Natural killer cell (primary cell): ENCODE measurements at regions of chr9 and their contacts with region 1.

Region 1: GRCh38 chr9:91253488-91253887 is 108.2 kb downstream of the AUH start:
- DNase-seq: peak in 1 of 2 donors; percentile 67
- ATAC-seq: peak; percentile 75 to 92 (median 89)
- H3K4me3 ChIP-seq: no peak overlapping the region
- H3K4me3 Mint-ChIP-seq: no peak overlapping the region
- H3K27ac ChIP-seq: peak overlapping the region; percentile 23
- H3K27ac Mint-ChIP-seq: no peak overlapping the region
- H3K4me1 ChIP-seq: peaks cover 19% of the 10 kb centered on the region
- H3K4me1 Mint-ChIP-seq: peaks cover 36 to 37% of the 10 kb centered on the region in 2 donors
- H3K27me3 ChIP-seq: no peaks in the 10 kb centered on the region
- H3K27me3 Mint-ChIP-seq: no peaks in the 10 kb centered on the region
- CTCF ChIP-seq: peak; percentile 17

Region 2: GRCh38 chr9:91036826-91037510 is 216.5 kb before region 1 on chr9:
- intact Hi-C with region 1: loop called (anchors 5 kb)
- DNase-seq: peak; percentile 36 to 75
- ATAC-seq: peak; percentile 78 to 86 (median 82)
- H3K4me3 ChIP-seq: no peak overlapping the region
- H3K4me3 Mint-ChIP-seq: peak overlapping the region; percentile 69
- H3K27ac ChIP-seq: no peak overlapping the region
- H3K27ac Mint-ChIP-seq: peak overlapping the region in 1 of 2 donors; percentile 71
- H3K4me1 ChIP-seq: peaks cover 23% of the 10 kb centered on the region
- H3K4me1 Mint-ChIP-seq: peaks cover 37 to 47% of the 10 kb centered on the region in 2 donors
- H3K27me3 ChIP-seq: no peaks in the 10 kb centered on the region
- H3K27me3 Mint-ChIP-seq: peaks cover 0 to 4% of the 10 kb centered on the region in 2 donors
- CTCF ChIP-seq: peak; percentile 53

Region 3: GRCh38 chr9:91101611-91102168 is 151.8 kb before region 1 on chr9:
- intact Hi-C with region 1: loop called (anchors 5 kb)
- DNase-seq: peak; percentile 41 to 92
- ATAC-seq: peak; percentile 59 to 83 (median 63)
- H3K4me3 ChIP-seq: no peak overlapping the region
- H3K4me3 Mint-ChIP-seq: peak overlapping the region; percentile 57
- H3K27ac ChIP-seq: no peak overlapping the region
- H3K27ac Mint-ChIP-seq: peak overlapping the region; percentile 65 to 85
- H3K4me1 ChIP-seq: peaks cover 38% of the 10 kb centered on the region
- H3K4me1 Mint-ChIP-seq: peaks cover 36 to 37% of the 10 kb centered on the region in 2 donors
- H3K27me3 ChIP-seq: no peaks in the 10 kb centered on the region
- H3K27me3 Mint-ChIP-seq: peaks cover 0 to 5% of the 10 kb centered on the region in 2 donors
- CTCF ChIP-seq: no peak

Region 4: DNA sequence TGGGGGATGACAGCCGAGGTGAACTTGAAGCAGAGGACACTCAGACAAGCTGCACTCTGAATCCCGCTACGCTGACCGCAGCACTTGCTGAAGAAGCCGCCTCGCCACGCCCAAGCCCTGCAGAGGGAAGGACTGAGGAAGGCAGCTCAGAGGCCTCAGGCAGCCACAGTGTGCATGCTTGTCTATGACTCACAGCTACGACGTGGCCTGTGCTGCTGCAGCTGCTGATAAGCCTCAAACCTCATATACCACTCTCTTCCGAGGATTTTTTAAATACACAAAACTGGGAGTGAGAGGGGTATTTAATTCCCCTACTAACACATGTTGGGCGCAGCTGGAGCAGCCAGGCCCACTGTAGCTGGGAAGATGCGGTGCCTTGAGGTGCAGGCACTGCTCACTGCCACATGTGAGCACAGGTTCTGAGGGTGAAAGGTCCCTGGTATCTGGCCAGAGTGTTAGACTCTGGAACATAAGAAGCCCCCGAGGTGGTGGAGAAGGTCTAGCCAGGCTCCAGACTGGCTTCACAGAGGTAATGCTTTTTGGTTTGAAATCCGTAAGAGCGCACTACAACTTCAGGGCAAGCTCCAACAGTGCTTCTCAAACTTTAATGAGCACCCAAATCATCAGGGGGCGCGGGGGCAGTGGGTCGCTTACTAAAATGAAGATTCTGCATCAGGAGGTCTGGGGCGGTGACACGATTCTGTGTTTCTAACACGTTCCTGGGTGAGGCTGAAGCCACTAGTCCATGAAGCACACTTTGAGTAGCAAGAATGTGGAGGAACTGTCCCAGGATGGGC is 88.6 kb before region 1 on chr9:
- intact Hi-C with region 1: loop called (anchors 5 kb)
- DNase-seq: peak; percentile 68 to 75
- ATAC-seq: peak; percentile 77 to 89 (median 78)
- H3K4me3 ChIP-seq: no peak overlapping the region
- H3K4me3 Mint-ChIP-seq: peak overlapping the region; percentile 87
- H3K27ac ChIP-seq: peak overlapping the region; percentile 78
- H3K27ac Mint-ChIP-seq: peak overlapping the region; percentile 93 to 94
- H3K4me1 ChIP-seq: peaks cover 62% of the 10 kb centered on the region
- H3K4me1 Mint-ChIP-seq: peaks cover 44 to 46% of the 10 kb centered on the region in 2 donors
- H3K27me3 ChIP-seq: no peaks in the 10 kb centered on the region
- H3K27me3 Mint-ChIP-seq: no peaks in the 10 kb centered on the region
- CTCF ChIP-seq: no peak

Region 5: DNA sequence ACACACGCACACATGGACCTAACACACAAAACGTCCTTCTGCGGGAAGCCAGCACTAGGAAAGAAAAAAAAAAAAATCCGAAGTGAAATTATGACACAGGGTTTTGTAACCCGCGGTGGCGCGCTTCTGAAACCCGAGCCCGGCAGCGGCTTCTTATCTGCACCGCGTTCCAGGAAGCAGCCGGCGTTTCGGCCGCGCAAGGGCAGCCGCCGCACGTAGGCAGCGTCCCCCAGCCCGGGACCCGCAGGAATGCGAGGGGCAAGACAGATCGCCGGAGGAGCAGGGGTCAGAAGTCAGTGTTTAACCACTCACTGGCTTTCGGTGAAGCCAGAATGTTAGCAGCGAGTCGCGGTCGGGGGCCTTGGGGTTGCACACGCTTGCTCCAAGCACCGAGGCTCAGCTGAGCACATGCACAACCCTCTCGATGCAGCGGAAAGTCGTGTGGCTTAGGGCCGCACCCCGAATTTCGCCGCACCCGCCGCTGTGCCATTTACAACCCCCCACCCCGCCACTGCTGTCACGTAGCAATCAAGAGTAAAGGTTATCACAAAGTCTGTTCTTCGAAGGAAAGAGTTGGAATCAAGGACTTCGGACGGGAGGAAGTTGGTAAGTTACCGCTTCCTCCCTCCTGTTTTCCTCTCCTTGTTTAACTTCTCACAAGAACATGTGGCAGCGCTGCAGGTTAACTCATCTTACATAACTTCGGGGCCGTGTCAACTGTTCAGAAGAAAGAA is 59.7 kb before region 1 on chr9:
- intact Hi-C with region 1: loop called (anchors 5 kb)
- DNase-seq: peak; percentile 69 to 75
- ATAC-seq: peak; percentile 45 to 76 (median 74)
- H3K4me3 ChIP-seq: peak overlapping the region; percentile 44
- H3K4me3 Mint-ChIP-seq: peak overlapping the region; percentile 92
- H3K27ac ChIP-seq: peak overlapping the region; percentile 81
- H3K27ac Mint-ChIP-seq: peak overlapping the region; percentile 95 to 98
- H3K4me1 ChIP-seq: peaks cover 48% of the 10 kb centered on the region
- H3K4me1 Mint-ChIP-seq: peaks cover 55 to 61% of the 10 kb centered on the region in 2 donors
- H3K27me3 ChIP-seq: no peaks in the 10 kb centered on the region
- H3K27me3 Mint-ChIP-seq: no peaks in the 10 kb centered on the region
- CTCF ChIP-seq: no peak

Region 6: DNA sequence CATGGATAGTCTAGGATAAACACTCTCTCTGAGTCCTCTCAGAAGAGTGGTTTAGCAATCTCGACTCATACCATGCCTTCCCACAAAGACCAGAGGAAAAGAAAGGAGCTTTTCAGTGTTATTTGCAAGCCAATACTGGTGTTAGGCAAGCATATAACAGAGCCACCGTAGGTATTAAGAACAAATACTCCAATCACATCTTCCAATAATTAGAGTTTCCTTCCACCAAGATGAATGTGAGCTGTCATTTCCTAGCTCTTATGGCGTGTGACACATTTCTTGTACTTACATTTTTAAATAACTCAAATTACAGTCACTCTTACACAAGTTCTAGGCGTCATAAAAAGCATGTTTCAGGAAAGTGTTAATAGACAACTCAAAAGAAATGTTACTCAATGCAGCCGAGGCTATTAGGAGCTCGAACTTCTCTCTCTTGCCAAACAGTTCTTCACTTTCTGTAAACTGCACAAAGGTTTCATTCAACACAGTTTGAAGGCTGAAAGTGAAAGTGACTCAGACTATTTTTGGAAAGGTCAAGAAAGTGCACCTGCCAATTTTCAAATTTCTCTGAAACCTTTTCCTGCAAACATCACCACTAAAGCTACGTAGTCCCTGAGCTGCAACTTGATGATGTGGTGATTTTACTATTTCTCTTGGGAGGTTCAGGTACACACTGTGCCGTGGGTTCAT is 45.6 kb before region 1 on chr9:
- intact Hi-C with region 1: loop called (anchors 5 kb)
- DNase-seq: peak in 1 of 2 donors; percentile 44
- ATAC-seq: peak; percentile 54 to 69 (median 58)
- H3K4me3 ChIP-seq: no peak overlapping the region
- H3K4me3 Mint-ChIP-seq: peak overlapping the region; percentile 67
- H3K27ac ChIP-seq: peak overlapping the region; percentile 56
- H3K27ac Mint-ChIP-seq: peak overlapping the region; percentile 75 to 88
- H3K4me1 ChIP-seq: peaks cover 29% of the 10 kb centered on the region
- H3K4me1 Mint-ChIP-seq: peaks cover 42 to 47% of the 10 kb centered on the region in 2 donors
- H3K27me3 ChIP-seq: no peaks in the 10 kb centered on the region
- H3K27me3 Mint-ChIP-seq: no peaks in the 10 kb centered on the region
- CTCF ChIP-seq: no peak

Region 7: DNA sequence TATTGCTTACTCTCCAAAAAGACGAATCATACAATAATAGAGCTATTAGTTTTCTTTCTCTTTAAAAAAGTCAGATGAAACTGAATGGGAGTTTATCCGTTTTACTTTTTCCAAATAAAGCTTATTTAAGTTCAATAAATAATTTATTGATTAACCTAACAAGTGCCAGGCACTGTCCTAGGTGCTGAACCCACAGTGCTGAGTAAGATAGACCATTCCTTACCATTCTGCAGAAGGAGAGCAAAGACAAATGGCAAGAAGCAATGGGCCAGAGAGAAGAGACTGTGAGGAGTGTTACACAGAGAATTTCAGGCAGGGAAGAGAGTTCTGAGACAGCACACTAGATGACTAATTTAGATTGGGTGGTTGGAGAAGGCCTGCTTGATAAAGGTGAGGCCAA is 19.0 kb before region 1 on chr9:
- intact Hi-C with region 1: no loop called
- DNase-seq: no peak
- ATAC-seq: no peak
- H3K4me3 ChIP-seq: no peak overlapping the region
- H3K4me3 Mint-ChIP-seq: no peak overlapping the region
- H3K27ac ChIP-seq: no peak overlapping the region
- H3K27ac Mint-ChIP-seq: no peak overlapping the region
- H3K4me1 ChIP-seq: no peaks in the 10 kb centered on the region
- H3K4me1 Mint-ChIP-seq: peaks cover 0 to 5% of the 10 kb centered on the region in 2 donors
- H3K27me3 ChIP-seq: no peaks in the 10 kb centered on the region
- H3K27me3 Mint-ChIP-seq: no peaks in the 10 kb centered on the region
- CTCF ChIP-seq: no peak

Region 8: DNA sequence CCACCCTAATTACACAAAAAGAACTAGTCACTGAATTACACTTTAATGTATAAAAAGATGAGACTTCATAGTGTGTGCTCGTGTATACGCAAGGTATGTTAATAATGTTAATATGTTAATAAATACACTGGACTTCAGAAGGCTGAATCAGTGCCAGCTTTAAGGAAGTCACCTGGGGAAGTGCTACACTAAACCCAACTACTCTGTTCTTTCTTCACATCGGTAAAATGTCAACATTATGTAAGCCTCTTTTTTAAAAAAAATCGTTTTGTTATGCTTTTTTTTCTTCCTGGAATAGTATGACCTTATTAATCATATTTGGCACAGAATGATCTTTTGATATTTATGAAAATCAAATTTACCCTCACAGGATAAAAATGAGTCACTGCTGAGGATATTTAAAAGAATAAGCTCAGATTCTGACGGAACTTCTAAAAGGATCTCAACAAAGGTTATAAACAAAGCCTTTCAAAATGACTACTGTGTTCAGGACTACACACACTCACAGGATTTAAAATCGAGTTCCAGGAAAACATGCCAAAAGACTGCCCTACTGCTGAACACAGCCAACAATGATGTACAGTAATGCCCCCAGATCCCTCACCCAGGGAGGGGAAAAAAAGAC is 32.4 kb after region 1 on chr9:
- intact Hi-C with region 1: no loop called
- DNase-seq: no peak
- ATAC-seq: no peak
- H3K4me3 ChIP-seq: no peak overlapping the region
- H3K4me3 Mint-ChIP-seq: no peak overlapping the region
- H3K27ac ChIP-seq: no peak overlapping the region
- H3K27ac Mint-ChIP-seq: peak overlapping the region in 1 of 2 donors; percentile 23
- H3K4me1 ChIP-seq: no peaks in the 10 kb centered on the region
- H3K4me1 Mint-ChIP-seq: no peaks in the 10 kb centered on the region
- H3K27me3 ChIP-seq: no peaks in the 10 kb centered on the region
- H3K27me3 Mint-ChIP-seq: no peaks in the 10 kb centered on the region
- CTCF ChIP-seq: no peak

Region 9: DNA sequence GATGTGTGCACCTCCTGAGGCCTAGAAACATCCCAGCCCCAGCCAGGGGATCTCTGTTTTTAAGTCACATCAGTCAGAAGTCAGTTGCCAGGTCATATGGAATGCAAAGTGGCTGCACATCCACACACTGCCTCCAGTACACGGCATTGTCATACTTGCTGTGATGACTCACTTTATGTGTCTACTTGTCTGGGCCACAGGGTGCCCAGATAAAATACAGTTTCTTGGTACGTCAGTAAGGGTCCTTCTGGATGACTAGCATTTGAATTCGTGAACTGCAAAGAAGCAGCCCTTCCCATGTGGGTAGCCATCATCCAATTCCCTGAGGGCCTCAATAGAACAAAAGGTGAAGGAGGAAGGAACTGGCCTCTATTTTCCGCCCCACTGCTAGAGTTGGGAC is 80.6 kb after region 1 on chr9:
- intact Hi-C with region 1: no loop called
- DNase-seq: no peak
- ATAC-seq: no peak
- H3K4me3 ChIP-seq: no peak overlapping the region
- H3K4me3 Mint-ChIP-seq: no peak overlapping the region
- H3K27ac ChIP-seq: no peak overlapping the region
- H3K27ac Mint-ChIP-seq: no peak overlapping the region
- H3K4me1 ChIP-seq: peaks cover 7% of the 10 kb centered on the region
- H3K4me1 Mint-ChIP-seq: peaks cover 24 to 39% of the 10 kb centered on the region in 2 donors
- H3K27me3 ChIP-seq: no peaks in the 10 kb centered on the region
- H3K27me3 Mint-ChIP-seq: no peaks in the 10 kb centered on the region
- CTCF ChIP-seq: no peak

Region 10: GRCh38 chr9:91740701-91741100 is 487.2 kb after region 1 on chr9:
- intact Hi-C with region 1: no loop called
- DNase-seq: no peak
- ATAC-seq: no peak
- H3K4me3 ChIP-seq: no peak overlapping the region
- H3K4me3 Mint-ChIP-seq: no peak overlapping the region
- H3K27ac ChIP-seq: no peak overlapping the region
- H3K27ac Mint-ChIP-seq: no peak overlapping the region
- H3K4me1 ChIP-seq: no peaks in the 10 kb centered on the region
- H3K4me1 Mint-ChIP-seq: no peaks in the 10 kb centered on the region
- H3K27me3 ChIP-seq: no peaks in the 10 kb centered on the region
- H3K27me3 Mint-ChIP-seq: peaks cover 5 to 8% of the 10 kb centered on the region in 2 donors
- CTCF ChIP-seq: no peak